ENCODE measurements at regions of chr6 and their contacts with region 1.

Region 1: GRCh38 chr6:44667668-44668390 is 280.3 kb downstream of the CDC5L start:
- DNase-seq: no peak
- ATAC-seq: peak in 3 of 8 donors; percentile 30 to 59 (median 40)
- H3K4me3 ChIP-seq: no peak overlapping the region
- H3K27ac ChIP-seq: peak overlapping the region in 1 of 10 donors; percentile 12
- H3K4me1 ChIP-seq: peaks cover 0 to 2% (median 0%) of the 10 kb centered on the region in 9 donors
- H3K27me3 ChIP-seq: peaks cover 0 to 16% (median 4%) of the 10 kb centered on the region in 7 donors
- CTCF ChIP-seq: peak in 8 of 9 donors; percentile 15 to 61 (median 48)

Region 2: DNA sequence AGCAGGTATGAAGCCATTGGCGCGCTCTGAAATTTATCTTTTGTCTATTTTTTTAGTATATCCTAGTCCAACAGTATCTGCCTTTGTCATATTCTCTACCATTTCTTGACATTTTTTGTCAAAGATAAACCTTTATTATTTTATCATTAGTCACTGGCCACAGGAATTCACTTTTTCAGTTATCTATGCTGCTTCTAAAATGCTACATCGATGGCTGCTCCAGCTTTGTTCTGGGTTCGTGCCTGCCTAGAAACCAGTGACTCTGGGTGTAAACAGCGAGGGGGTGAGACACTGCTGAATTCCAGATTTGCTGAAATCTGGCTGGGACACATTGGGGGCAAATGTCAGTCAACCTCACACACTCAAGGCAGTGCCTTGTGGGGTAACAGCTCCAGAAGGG is 86.9 kb before region 1 on chr6:
- intact Hi-C with region 1: no loop called
- DNase-seq: no peak
- ATAC-seq: no peak
- H3K4me3 ChIP-seq: no peak overlapping the region
- H3K27ac ChIP-seq: no peak overlapping the region
- H3K4me1 ChIP-seq: no peaks in the 10 kb centered on the region
- H3K27me3 ChIP-seq: no peaks in the 10 kb centered on the region
- CTCF ChIP-seq: no peak

Region 3: GRCh38 chr6:44829836-44830235 is 162.0 kb after region 1 on chr6:
- intact Hi-C with region 1: loop called in 1 of 10 experiments (anchors 5 kb)
- DNase-seq: no peak
- ATAC-seq: no peak
- H3K4me3 ChIP-seq: no peak overlapping the region
- H3K27ac ChIP-seq: no peak overlapping the region
- H3K4me1 ChIP-seq: peaks cover 0 to 15% (median 0%) of the 10 kb centered on the region in 9 donors
- H3K27me3 ChIP-seq: no peaks in the 10 kb centered on the region
- CTCF ChIP-seq: no peak

Region 4: GRCh38 chr6:44858998-44859397 is 191.2 kb after region 1 on chr6:
- intact Hi-C with region 1: no loop called
- DNase-seq: no peak
- ATAC-seq: peak in 1 of 8 donors; percentile 44
- H3K4me3 ChIP-seq: no peak overlapping the region
- H3K27ac ChIP-seq: no peak overlapping the region
- H3K4me1 ChIP-seq: peaks cover 0 to 23% (median 10%) of the 10 kb centered on the region in 9 donors
- H3K27me3 ChIP-seq: no peaks in the 10 kb centered on the region
- CTCF ChIP-seq: peak in 2 of 9 donors; percentile 24 to 29

Measured in heart right ventricle (tissue), 16 donors.